ENCODE measurements at regions of chr15 and their contacts with region 1.

Region 1: GRCh38 chr15:75367913-75368688 is at the start of gene MAN2C1:
- DNase-seq: peak; percentile 80 to 96 (median 87)
- ATAC-seq: peak; percentile 98
- H3K4me3 ChIP-seq: peak within 1 kb of the TSS; percentile 75
- H3K4me3 Mint-ChIP-seq: peak within 1 kb of the TSS; percentile 88 to 94 (median 92)
- H3K27ac ChIP-seq: peak within 1 kb of the TSS; percentile 93
- H3K27ac Mint-ChIP-seq: peak within 1 kb of the TSS; percentile 90 to 97 (median 94)
- H3K4me1 ChIP-seq: peaks cover 11 to 15% of the 10 kb centered on the region in 2 donors
- H3K4me1 Mint-ChIP-seq: peaks cover 8 to 28% (median 24%) of the 10 kb centered on the region in 7 donors
- H3K27me3 ChIP-seq: no peaks in the 10 kb centered on the region
- H3K27me3 Mint-ChIP-seq: no peaks in the 10 kb centered on the region
- total RNA-seq, gene MAN2C1: 298 to 557 (median 451) TPM

Region 2: GRCh38 chr15:75335705-75336355 is 32.3 kb before region 1 on chr15 and contains the start of gene COMMD4:
- CTCF ChIA-PET with region 1: interaction called, 9 read pairs
- POLR2A ChIA-PET with region 1: interaction called, 9 read pairs
- intact Hi-C with region 1: loop called in 1 of 2 experiments (anchors 1 kb)
- DNase-seq: peak; percentile 36 to 88 (median 50)
- ATAC-seq: peak; percentile 78
- H3K4me3 ChIP-seq: peak within 1 kb of the TSS; percentile 77
- H3K4me3 Mint-ChIP-seq: peak within 1 kb of the TSS; percentile 84 to 97 (median 90)
- H3K27ac ChIP-seq: peak within 1 kb of the TSS; percentile 70
- H3K27ac Mint-ChIP-seq: peak within 1 kb of the TSS; percentile 72 to 95 (median 86)
- H3K4me1 ChIP-seq: peaks cover 7 to 11% of the 10 kb centered on the region in 2 donors
- H3K4me1 Mint-ChIP-seq: peaks cover 15 to 27% (median 18%) of the 10 kb centered on the region in 7 donors
- H3K27me3 ChIP-seq: no peaks in the 10 kb centered on the region
- H3K27me3 Mint-ChIP-seq: peaks cover 0 to 6% (median 0%) of the 10 kb centered on the region in 5 donors
- total RNA-seq, gene COMMD4: 23.4 to 84.2 (median 26.3) TPM

Region 3: DNA sequence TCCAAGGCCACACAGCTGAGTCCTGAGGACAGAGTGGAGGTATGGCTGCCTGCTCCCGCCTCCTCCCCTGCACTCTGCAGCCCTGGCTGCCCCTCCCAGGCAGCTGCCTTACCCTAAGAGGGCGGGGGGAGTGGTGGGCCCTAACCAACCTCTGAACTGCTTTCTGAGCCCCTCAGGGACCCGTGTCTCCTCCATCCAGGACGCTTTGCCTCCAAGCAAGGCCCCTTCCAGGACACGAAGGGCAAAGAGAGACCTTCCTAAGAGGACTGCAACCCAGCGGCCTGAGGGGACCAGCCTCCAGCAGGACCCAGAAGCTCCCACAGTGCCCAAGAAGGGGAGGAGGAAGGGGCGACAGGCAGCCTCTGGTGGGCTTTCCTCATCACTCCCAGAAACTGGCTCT is 13.6 kb before region 1 on chr15:
- CTCF ChIA-PET with region 1: interaction called, 15 read pairs
- POLR2A ChIA-PET with region 1: interaction called, 94 read pairs
- intact Hi-C with region 1: loop called in 1 of 2 experiments (anchors 2 kb)
- DNase-seq: no peak
- ATAC-seq: no peak
- H3K4me3 ChIP-seq: no peak overlapping the region
- H3K4me3 Mint-ChIP-seq: no peak overlapping the region
- H3K27ac ChIP-seq: peak overlapping the region; percentile 3
- H3K27ac Mint-ChIP-seq: peak overlapping the region in 4 of 9 donors; percentile 5 to 97 (median 34)
- H3K4me1 ChIP-seq: peaks cover 11 to 13% of the 10 kb centered on the region in 2 donors
- H3K4me1 Mint-ChIP-seq: peaks cover 7 to 19% (median 17%) of the 10 kb centered on the region in 7 donors
- H3K27me3 ChIP-seq: no peaks in the 10 kb centered on the region
- H3K27me3 Mint-ChIP-seq: peaks cover 0 to 4% (median 0%) of the 10 kb centered on the region in 5 donors

Region 4: DNA sequence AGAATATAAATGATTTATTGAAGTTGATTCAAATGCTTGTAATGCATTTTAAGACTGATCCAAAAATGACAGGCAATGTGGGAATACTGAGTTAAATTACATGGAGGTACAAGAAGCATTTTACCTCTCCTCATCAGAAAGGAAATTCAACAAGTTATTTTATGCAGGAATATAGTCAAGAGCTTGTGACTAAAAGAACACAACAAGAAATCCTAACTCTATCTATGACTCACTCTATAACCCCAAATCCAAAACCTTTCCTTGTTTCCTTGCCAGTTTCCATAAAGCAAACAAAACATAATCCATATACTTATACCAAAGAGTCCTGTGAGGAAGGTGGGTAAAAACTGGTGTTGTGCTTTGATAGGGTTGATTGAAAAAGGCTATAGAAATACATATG is 52.6 kb after region 1 on chr15:
- CTCF ChIA-PET with region 1: no interaction called
- POLR2A ChIA-PET with region 1: no interaction called
- intact Hi-C with region 1: no loop called
- DNase-seq: no peak
- ATAC-seq: no peak
- H3K4me3 ChIP-seq: no peak overlapping the region
- H3K4me3 Mint-ChIP-seq: no peak overlapping the region
- H3K27ac ChIP-seq: no peak overlapping the region
- H3K27ac Mint-ChIP-seq: no peak overlapping the region
- H3K4me1 ChIP-seq: no peaks in the 10 kb centered on the region
- H3K4me1 Mint-ChIP-seq: peaks cover 4 to 19% (median 16%) of the 10 kb centered on the region in 7 donors
- H3K27me3 ChIP-seq: no peaks in the 10 kb centered on the region
- H3K27me3 Mint-ChIP-seq: no peaks in the 10 kb centered on the region

Region 5: GRCh38 chr15:75508840-75509532 is 140.9 kb after region 1 on chr15:
- CTCF ChIA-PET with region 1: interaction called, 4 read pairs
- POLR2A ChIA-PET with region 1: interaction called, 6 read pairs
- intact Hi-C with region 1: loop called in 1 of 2 experiments (anchors 1 kb)
- DNase-seq: peak in 7 of 9 donors; percentile 38 to 65 (median 55)
- ATAC-seq: peak; percentile 37
- H3K4me3 ChIP-seq: no peak overlapping the region
- H3K4me3 Mint-ChIP-seq: no peak overlapping the region
- H3K27ac ChIP-seq: no peak overlapping the region
- H3K27ac Mint-ChIP-seq: peak overlapping the region in 5 of 9 donors; percentile 2 to 31 (median 21)
- H3K4me1 ChIP-seq: no peaks in the 10 kb centered on the region
- H3K4me1 Mint-ChIP-seq: peaks cover 0 to 5% (median 4%) of the 10 kb centered on the region in 7 donors
- H3K27me3 ChIP-seq: no peaks in the 10 kb centered on the region
- H3K27me3 Mint-ChIP-seq: no peaks in the 10 kb centered on the region

Region 6: DNA sequence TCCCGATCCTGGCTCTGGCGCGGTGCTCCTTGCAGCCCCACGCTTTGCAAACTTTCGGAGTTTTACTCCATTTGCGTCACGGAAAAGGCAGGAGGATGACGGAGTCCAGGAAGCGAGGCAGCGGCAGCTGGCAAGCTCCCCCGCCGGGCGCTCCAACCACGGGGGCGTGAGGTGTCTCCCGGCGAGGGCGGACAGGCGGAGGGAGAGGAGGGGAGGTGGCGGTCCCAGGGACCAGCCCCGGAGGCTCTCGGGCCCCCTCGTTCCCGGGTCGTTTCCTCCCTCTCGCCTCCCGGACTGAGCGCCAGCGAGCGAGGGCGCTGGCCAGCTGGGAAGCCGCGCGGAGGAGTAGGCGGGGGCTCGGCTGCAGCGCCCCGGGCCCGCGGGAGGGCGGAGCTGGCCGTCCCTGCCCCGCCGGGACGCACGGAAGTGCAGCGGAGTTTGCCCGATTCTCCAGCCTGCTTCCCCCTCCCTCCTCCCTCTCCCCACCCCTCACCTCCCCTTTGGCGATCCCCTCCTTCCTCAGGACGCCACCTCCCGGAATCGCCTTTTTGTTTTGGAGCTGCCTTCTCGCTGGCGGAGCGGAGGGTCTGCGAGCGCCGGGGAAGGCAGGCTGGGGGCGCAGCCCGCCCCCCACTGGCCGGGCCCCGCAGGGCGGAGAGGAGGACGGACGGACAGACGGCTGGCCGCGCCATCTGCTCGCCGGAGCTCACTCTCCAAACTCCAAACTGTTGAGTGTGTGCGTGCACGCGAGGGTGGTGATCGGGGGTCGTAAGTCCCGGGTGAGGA is 279.5 kb after region 1 on chr15 and contains the start of gene SNX33:
- CTCF ChIA-PET with region 1: interaction called, 57 read pairs
- POLR2A ChIA-PET with region 1: interaction called, 17 read pairs
- intact Hi-C with region 1: no loop called
- DNase-seq: peak; percentile 24 to 73 (median 43)
- ATAC-seq: peak; percentile 71
- H3K4me3 ChIP-seq: peak within 1 kb of the TSS; percentile 82
- H3K4me3 Mint-ChIP-seq: peak within 1 kb of the TSS; percentile 80 to 91 (median 86)
- H3K27ac ChIP-seq: peak within 1 kb of the TSS; percentile 68
- H3K27ac Mint-ChIP-seq: peak within 1 kb of the TSS; percentile 44 to 88 (median 79)
- H3K4me1 ChIP-seq: peaks cover 6 to 18% of the 10 kb centered on the region in 2 donors
- H3K4me1 Mint-ChIP-seq: peaks cover 12 to 49% (median 38%) of the 10 kb centered on the region in 7 donors
- H3K27me3 ChIP-seq: no peaks in the 10 kb centered on the region
- H3K27me3 Mint-ChIP-seq: peaks cover 0 to 9% (median 0%) of the 10 kb centered on the region in 5 donors
- total RNA-seq, gene SNX33: 0.94 to 3.4 (median 1.4) TPM

Measured in naive thymus-derived CD4-positive, alpha-beta T cell (primary cell).